ENCODE measurements at regions of chr9 and their contacts with region 1.

Region 1: DNA sequence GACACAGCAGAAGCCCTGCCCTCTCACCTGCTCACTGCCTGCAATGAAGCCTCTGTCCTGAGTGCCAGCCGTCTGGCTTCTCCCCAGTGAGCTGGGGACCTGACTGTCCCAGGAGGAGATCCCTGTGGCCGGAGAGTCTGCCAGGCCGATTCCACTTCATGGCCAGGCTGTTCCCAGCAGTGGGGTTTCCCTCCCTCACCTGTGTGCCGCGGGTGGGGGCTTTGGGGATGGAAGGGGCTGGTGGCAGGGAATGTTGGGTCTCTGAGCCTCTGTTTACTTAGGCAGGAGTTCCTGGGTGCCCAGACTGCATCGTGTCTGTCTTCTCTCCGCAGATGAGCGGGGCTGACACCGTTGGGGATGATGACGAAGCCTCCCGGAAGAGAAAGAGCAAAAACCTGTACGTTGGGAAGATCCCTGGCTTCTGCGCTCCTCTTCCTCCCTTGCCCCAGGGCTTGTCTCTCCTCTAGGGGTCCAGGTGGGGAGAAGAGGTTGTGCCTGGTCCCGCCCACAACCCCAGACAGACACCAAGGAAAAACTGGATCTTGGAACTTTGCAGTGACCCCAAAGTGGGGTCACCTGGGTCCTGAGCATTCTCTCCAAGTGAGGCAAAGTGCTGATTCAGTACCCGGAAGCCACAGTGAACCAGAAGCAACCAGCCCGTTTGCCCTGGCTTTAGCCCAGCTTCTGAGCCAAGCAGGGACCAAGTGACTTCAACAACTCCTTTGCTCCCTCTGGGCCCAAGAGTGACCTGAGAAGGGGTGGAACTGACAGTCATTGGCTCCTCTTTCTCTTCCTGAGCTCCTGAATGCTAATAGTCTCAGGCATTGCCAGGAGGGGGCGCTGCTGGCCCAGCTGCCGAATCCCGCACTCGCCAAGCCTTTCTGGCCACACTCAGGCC is 127.7 kb downstream of the RGS3 start:
- DNase-seq: peak; percentile 86
- ATAC-seq: peak; percentile 26

Region 2: GRCh38 chr9:113309204-113309813 is 281.9 kb before region 1 on chr9:
- intact Hi-C with region 1: no loop called
- DNase-seq: no peak
- ATAC-seq: no peak

Region 3: DNA sequence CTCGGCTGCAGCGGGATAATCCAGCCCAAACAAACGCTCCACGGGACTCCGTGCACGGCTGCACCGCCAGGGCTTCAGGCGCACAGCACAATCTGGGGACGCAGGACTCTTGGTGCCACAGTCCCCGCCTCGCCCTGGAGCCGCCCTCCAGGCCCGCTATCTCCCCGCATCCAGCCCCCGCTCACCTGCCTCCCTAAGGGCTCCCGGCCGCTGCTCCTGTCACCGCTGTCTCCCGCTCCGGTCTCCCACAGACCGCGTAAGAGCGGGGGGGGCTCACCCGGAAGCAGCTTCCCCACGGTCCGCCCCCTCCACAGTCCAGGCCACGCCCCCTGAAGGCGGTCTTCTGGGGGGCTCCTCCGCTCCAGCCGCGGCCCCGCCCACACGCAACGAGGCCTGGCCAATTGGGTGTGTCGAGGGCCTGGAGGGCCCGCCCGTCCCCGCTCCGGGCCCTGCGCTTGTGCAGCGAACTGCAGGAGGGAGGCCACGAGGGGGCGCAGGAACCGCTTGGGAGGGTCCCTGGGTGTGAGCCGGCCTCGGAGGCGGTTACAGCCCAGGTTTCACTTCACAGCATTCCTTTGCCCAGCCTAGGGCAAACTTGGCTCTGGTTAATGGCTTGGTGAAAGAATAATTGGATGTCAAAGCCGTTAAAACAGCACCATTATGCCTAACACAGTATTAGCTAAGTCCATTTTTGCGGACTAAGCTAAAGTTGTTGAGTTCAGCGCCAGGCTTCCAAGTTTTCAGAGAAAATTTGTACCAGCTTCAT is 190.0 kb before region 1 on chr9 and contains the start of gene ALAD:
- intact Hi-C with region 1: loop called (anchors 5 kb)
- DNase-seq: peak; percentile 100
- ATAC-seq: peak; percentile 99
- total RNA-seq, gene ALAD: 136 TPM

Region 4: DNA sequence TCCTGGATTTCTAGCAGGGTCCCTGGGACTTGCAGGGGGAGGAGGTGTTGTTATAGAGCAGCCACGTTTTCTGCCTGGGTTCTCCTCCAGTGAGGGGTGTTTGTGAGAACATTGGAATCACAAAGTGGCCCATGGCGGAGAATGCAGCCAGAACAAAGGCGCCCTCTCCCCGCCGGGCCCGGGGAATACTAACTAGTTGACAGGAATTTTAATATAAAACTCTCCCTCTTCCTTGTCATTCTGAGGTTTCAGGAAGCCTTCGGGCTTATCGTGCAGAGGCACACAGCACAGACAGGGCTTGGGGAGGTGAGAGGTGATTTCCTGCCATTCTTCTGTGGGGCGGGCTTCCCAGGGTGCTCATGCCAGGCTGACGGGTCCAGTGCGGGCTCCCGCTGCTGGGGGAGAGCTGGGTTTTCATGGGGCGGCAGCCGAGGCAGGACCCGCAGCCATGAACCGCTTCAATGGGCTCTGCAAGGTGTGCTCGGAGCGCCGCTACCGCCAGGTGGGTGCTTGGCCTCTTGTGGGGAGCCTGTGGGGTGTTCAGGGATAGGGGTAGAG is 90.0 kb before region 1 on chr9:
- intact Hi-C with region 1: loop called (anchors 5 kb)
- DNase-seq: no peak
- ATAC-seq: peak; percentile 59

Region 5: DNA sequence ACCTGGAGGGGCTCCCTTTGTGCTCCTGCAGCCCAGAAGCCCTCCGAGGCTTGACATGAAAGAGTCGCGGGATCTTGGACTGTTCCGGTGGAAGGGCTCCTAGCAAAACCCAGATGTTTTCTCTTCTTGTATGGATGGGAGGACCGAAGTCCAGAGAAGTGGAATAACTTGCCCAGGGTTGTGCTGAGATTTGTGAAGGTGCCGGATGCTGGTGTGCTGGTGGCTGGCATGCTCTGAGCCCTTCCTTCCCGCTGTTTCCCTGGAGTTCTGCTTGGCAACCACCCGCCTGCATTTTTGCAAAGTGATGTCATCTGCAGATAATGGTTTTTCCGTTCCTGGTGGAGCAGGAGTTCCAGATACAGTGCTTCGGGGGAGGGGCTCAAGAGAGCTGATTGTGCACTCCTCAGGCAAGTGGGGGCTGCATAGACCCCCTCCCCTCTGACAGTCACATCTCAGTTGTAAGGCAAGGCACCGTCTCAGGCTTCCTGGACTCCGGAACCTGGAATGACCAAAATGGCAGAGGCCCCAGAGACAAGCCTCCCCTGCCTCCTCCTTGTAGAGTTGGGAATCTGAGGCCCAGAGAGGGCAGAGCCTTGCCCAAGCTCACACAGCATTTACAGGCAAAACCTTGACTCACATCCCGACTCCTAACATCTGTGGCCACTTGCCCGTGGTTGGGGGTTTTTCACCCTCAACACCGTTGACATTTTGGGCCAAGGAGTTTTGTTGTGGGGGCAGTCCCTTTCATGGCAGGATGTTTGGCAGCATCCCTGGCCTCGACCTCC is 29.3 kb after region 1 on chr9:
- intact Hi-C with region 1: loop called (anchors 1 kb)
- DNase-seq: no peak
- ATAC-seq: peak; percentile 50

Measured in Right ventricle myocardium inferior (tissue), 1 donor.